HepG2 (cell line): ENCODE measurements at regions of chr10 and their contacts with region 1.

Region 1: GRCh38 chr10:80498833-80499741 is 38.6 kb upstream of the SH2D4B start:
- DNase-seq: peak; percentile 94
- ATAC-seq: peak; percentile 95
- H3K4me3 ChIP-seq: peak overlapping the region in 2 of 3 experiments; percentile 24 to 45; a peak in 3 of 6 replicates
- H3K27ac ChIP-seq: peak overlapping the region; percentile 90
- H3K4me1 ChIP-seq: peaks cover 100% of the 10 kb centered on the region
- H3K27me3 ChIP-seq: no peaks in the 10 kb centered on the region
- CTCF ChIP-seq: peak; percentile 31; the same call in 1 of the 2 replicates
- EP300 ChIP-seq: peak; percentile 80 to 86
- POLR2A ChIP-seq: peak; percentile 35 to 44; a peak in 1 of 4 replicates
- RAD21 ChIP-seq: no peak; the same call in 1 of the 2 replicates

Region 2: GRCh38 chr10:80260295-80261243 is 238.5 kb before region 1 on chr10:
- CTCF ChIA-PET with region 1: no interaction called
- POLR2A ChIA-PET with region 1: no interaction called
- in situ Hi-C with region 1: loop called (anchors 25 kb)
- intact Hi-C with region 1: no loop called
- DNase-seq: peak; percentile 48
- ATAC-seq: peak; percentile 37
- H3K4me3 ChIP-seq: no peak overlapping the region
- H3K27ac ChIP-seq: no peak overlapping the region
- H3K4me1 ChIP-seq: peaks cover 69% of the 10 kb centered on the region
- H3K27me3 ChIP-seq: no peaks in the 10 kb centered on the region
- CTCF ChIP-seq: peak; percentile 78
- EP300 ChIP-seq: no peak
- POLR2A ChIP-seq: no peak
- RAD21 ChIP-seq: peak; percentile 18; the same call in 1 of the 2 replicates

Region 3: GRCh38 chr10:80459047-80459931 is 39.8 kb before region 1 on chr10:
- CTCF ChIA-PET with region 1: no interaction called
- POLR2A ChIA-PET with region 1: interaction called, 25 read pairs
- in situ Hi-C with region 1: loop called (anchors 5 kb)
- intact Hi-C with region 1: loop called (anchors 2 kb)
- DNase-seq: no peak
- ATAC-seq: peak; percentile 10; the same call in 2 of the 3 replicates
- H3K4me3 ChIP-seq: peak overlapping the region in 1 of 3 experiments; percentile 24; a peak in 2 of 6 replicates
- H3K27ac ChIP-seq: peak overlapping the region; percentile 10
- H3K4me1 ChIP-seq: peaks cover 90% of the 10 kb centered on the region
- H3K27me3 ChIP-seq: no peaks in the 10 kb centered on the region; a peak in 1 of 5 replicates
- CTCF ChIP-seq: no peak
- EP300 ChIP-seq: no peak
- POLR2A ChIP-seq: no peak
- RAD21 ChIP-seq: no peak

Region 4: DNA sequence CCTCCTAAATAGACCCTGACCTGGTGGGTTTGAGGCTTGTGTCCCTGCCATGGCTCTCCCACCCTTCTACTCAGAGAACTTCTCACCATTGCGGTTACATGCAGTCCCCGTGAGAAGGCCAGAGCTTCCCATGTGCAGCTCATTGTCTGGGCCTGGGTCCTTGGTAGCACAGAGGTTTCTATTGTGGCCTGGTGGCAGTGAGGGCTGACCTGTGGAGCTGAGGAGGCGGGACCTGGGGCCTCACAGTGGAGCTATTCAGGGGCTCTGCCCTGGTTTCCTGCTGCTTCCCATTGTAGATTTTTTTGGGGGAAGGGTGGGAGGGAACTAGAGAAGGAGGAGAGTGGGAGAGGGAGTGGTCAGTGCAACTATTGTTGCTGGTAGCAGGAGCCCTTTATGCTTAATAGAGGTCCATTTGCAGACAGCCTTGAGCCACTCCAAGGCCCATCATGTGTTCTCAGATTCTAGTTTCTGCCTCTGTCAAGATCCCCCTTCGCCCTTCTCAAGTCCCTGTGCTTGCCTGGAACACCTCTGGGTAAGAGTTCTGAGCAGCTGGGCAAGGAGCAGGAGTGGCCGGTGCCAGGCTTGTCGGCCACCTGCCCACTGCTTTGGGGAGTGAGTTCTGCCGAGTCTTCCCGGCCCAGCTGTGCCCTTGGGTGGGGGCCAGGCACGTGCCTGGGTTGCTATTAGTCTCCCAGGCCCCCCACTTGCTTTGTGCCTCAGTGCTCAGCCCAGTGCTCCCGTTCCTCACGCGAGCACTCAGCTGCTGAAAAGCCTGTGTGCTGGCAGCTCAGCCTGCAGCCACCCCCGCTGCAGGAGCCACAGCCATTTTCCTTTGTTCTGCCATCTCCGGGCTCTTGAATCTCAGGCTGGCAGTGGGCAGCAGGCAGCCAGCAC is 34.3 kb before region 1 on chr10:
- CTCF ChIA-PET with region 1: no interaction called
- POLR2A ChIA-PET with region 1: interaction called, 25 read pairs
- in situ Hi-C with region 1: no loop called
- intact Hi-C with region 1: loop called (anchors 2 kb)
- DNase-seq: peak; percentile 97
- ATAC-seq: peak; percentile 97
- H3K4me3 ChIP-seq: peak overlapping the region in 1 of 3 experiments; percentile 46; a peak in 2 of 6 replicates
- H3K27ac ChIP-seq: peak overlapping the region; percentile 90
- H3K4me1 ChIP-seq: peaks cover 99% of the 10 kb centered on the region
- H3K27me3 ChIP-seq: no peaks in the 10 kb centered on the region
- CTCF ChIP-seq: no peak
- EP300 ChIP-seq: peak in 1 of 2 experiments; percentile 53; a peak in 1 of 4 replicates
- POLR2A ChIP-seq: peak in 1 of 2 experiments; percentile 70; a peak in 2 of 4 replicates
- RAD21 ChIP-seq: no peak

Region 5: DNA sequence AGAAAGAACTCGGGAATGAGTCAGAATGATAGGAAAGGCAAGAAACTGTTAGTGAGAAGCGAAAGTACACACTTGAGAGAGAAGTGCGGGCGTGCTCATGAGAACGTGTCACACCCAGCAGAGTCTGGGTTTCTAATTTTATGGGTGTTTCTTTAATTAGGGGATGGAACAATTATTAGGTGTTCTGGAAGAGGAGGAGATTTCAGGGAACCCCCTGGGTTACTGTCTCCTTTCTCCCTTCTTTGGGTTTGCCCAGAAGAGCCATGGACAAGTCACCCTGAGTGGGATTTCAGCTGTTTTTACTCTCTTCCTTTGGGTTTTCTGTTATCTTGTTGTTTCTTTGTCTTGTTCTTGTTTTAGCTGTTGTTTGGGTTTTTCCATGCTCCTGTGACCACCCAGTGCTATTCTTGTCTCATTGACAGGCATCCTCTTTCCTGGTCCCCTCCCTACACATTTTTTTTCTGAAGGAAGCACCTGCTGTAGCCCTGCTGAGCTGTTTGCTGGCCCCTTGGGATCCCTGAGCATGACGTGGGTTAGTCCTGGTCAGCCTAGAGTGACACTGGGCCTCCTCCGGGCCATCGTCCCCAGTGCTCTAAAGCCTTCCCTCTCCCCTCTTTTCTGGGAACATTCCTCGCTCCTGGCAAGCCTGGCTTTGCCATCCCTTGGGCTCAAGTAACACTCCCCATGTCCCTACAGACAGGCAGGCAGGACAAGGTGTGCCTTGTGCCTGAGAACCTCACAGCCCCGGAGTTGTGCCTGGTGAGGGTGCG is 42.1 kb after region 1 on chr10:
- CTCF ChIA-PET with region 1: no interaction called
- POLR2A ChIA-PET with region 1: no interaction called
- in situ Hi-C with region 1: no loop called
- intact Hi-C with region 1: no loop called
- DNase-seq: no peak
- ATAC-seq: no peak
- H3K4me3 ChIP-seq: no peak overlapping the region
- H3K27ac ChIP-seq: no peak overlapping the region
- H3K4me1 ChIP-seq: no peaks in the 10 kb centered on the region
- H3K27me3 ChIP-seq: peaks cover 5 to 22% of the 10 kb centered on the region in 2 experiments; a peak in 3 of 5 replicates
- CTCF ChIP-seq: no peak
- EP300 ChIP-seq: no peak
- POLR2A ChIP-seq: no peak
- RAD21 ChIP-seq: no peak

Region 6: DNA sequence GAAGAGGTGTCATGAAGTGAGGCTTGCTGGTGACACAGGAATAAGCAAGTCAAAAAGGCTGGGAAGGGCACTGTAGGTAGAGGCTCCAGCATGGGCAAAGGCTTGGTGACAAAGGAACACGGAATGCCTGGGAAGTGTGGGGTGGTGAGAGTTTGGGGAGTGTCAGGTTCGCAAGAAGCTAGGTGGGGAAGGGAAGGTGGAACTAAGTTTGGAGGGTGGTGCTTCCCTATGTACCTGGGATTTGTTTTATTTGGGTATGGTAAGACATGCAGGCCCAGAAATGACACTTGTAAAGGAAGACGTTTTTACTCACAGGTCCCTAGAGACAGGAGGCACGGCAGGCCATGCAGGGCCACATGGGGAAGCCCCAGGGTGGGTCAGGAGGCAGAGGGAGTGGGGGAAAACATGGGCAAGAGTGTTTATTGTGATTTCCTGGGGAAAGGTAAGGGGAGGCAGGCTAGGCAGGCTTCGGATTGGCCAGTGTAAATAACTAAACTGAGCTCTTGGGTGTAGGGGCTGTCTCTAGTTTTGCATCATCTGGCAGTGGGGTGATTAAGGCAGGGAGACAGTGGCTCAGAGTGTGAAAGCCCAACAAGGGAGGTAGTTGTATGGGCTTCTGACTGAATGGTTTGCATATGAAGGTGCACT is 90.8 kb after region 1 on chr10:
- CTCF ChIA-PET with region 1: no interaction called
- POLR2A ChIA-PET with region 1: no interaction called
- in situ Hi-C with region 1: no loop called
- intact Hi-C with region 1: no loop called
- DNase-seq: no peak
- ATAC-seq: no peak
- H3K4me3 ChIP-seq: no peak overlapping the region
- H3K27ac ChIP-seq: no peak overlapping the region
- H3K4me1 ChIP-seq: no peaks in the 10 kb centered on the region
- H3K27me3 ChIP-seq: no peaks in the 10 kb centered on the region
- CTCF ChIP-seq: no peak
- EP300 ChIP-seq: no peak
- POLR2A ChIP-seq: no peak
- RAD21 ChIP-seq: no peak